A673 (cell line): ENCODE measurements at regions of chr9 and their contacts with region 1.

Region 1: GRCh38 chr9:131094622-131095021 is 1.7 kb upstream of the AIF1L start:
- DNase-seq: no peak
- H3K4me3 ChIP-seq: no peak overlapping the region
- H3K27ac ChIP-seq: no peak overlapping the region
- H3K4me1 ChIP-seq: no peaks in the 10 kb centered on the region
- H3K27me3 ChIP-seq: peaks cover 7% of the 10 kb centered on the region
- CTCF ChIP-seq: no peak

Region 2: DNA sequence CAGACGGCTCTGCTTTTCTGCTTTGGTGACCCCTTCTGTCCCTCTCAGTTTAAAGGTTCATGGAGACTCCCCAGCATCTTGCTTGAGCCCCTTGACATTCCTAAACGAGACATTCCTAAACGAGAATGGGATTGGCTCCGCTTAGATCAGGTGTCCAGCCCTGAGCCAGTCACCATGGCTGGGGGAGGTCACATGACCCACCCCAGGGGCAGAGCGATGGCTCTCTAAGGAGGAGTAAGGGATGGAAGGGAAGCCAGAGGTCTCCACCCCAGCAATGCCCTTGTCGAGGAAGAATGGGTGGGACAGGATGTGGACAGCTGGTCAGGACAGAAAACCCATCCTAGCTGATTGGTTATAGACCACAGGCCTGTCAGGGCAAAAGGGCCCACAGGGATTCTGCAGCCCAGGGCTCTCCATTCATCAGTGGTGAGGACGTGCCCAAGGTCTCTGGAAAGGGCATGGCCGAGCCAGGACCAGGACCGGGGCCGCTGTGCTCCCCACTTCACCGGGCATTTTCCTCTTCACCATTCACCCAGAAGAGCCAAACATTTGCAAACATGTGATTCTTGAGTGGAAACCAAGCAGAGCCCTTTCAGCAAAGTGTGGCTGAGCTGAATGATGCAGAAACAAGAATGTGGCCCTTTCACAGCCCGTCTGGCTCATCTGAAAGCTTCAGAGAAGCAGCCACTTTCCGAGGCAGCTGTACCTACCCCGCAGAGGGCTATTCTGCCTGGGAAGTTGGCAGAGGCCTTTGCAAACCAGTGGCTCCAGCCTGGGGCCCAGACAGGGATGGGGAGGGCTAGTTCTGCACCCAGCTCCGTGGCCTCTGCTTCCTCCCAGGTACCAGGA is 18.1 kb before region 1 on chr9:
- CTCF ChIA-PET with region 1: no interaction called
- POLR2A ChIA-PET with region 1: no interaction called
- intact Hi-C with region 1: loop called (anchors 1 kb)
- DNase-seq: no peak
- H3K4me3 ChIP-seq: no peak overlapping the region
- H3K27ac ChIP-seq: no peak overlapping the region
- H3K4me1 ChIP-seq: no peaks in the 10 kb centered on the region
- H3K27me3 ChIP-seq: no peaks in the 10 kb centered on the region
- CTCF ChIP-seq: no peak